ENCODE measurements at regions of chr17 and their contacts with region 1.

Region 1: DNA sequence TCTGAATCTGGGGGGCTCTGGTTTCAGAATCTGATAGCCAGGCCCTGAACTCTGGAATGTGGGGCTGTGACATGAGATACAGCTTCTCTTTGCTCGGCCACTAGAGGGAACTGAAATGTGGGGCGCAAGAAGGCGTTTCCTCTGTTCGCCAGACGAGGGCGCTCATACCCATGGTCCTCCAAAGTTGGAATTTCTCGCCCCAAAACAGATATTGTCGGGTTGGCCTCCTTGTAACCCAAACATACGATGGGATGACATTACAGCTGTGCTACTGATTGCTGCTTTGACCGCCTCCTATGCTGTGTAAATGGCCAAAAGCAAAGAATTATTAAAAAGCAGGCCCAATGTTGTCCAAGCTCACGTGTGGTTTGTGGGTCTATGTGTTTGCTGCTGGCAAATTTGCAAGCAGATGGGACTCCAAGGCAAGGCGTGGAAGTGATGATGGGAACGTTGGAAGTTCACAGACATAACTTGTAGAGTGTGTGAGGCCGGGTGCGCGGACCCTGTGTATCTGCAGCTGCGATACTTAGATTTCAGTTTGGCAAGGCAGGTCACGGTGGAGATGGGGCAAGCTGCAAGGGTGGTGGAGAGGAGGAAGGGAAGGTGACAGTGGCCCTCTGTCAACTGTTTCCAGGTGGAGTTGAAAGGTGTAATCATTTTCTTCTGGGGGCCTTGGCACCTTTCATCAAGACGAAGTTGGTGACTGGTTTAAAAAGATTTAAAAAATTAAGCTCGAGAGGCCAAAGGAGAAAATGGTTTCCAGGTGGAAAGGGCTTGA is 13.0 kb upstream of the MSI2 start:
- DNase-seq: peak; percentile 52 to 78 (median 68)
- ATAC-seq: peak; percentile 99
- H3K4me3 ChIP-seq: no peak overlapping the region
- H3K4me3 Mint-ChIP-seq: no peak overlapping the region
- H3K27ac ChIP-seq: no peak overlapping the region
- H3K27ac Mint-ChIP-seq: peak overlapping the region in 1 of 9 donors; percentile 36
- H3K4me1 ChIP-seq: no peaks in the 10 kb centered on the region
- H3K4me1 Mint-ChIP-seq: peaks cover 0 to 13% (median 0%) of the 10 kb centered on the region in 7 donors
- H3K27me3 ChIP-seq: no peaks in the 10 kb centered on the region
- H3K27me3 Mint-ChIP-seq: peaks cover 2 to 33% (median 5%) of the 10 kb centered on the region in 5 donors

Region 2: DNA sequence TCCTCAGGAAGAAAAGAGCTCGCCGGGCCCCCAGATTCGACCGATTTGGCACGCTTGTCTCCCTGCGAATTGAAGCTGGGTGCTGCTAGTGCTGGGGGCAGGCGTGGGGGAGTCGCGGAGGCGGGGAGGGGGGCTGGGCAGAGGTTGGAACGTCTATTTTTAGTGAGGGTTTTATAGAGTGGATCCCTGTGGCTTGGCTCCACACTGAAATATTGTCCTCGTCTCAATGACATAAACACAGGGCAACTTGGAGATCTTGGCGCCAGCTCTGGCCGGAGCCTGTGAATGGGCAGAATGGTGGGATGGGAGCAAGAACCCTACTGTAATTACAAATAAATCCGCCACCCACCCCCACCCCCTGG is 665.5 kb before region 1 on chr17:
- CTCF ChIA-PET with region 1: no interaction called
- POLR2A ChIA-PET with region 1: no interaction called
- intact Hi-C with region 1: no loop called
- DNase-seq: no peak
- ATAC-seq: no peak
- H3K4me3 ChIP-seq: no peak overlapping the region
- H3K4me3 Mint-ChIP-seq: no peak overlapping the region
- H3K27ac ChIP-seq: no peak overlapping the region
- H3K27ac Mint-ChIP-seq: no peak overlapping the region
- H3K4me1 ChIP-seq: no peaks in the 10 kb centered on the region
- H3K4me1 Mint-ChIP-seq: no peaks in the 10 kb centered on the region
- H3K27me3 ChIP-seq: peaks cover 0 to 3% of the 10 kb centered on the region in 2 donors
- H3K27me3 Mint-ChIP-seq: peaks cover 7 to 23% (median 22%) of the 10 kb centered on the region in 5 donors

Region 3: GRCh38 chr17:57130761-57131461 is 112.4 kb before region 1 on chr17:
- CTCF ChIA-PET with region 1: no interaction called
- POLR2A ChIA-PET with region 1: no interaction called
- intact Hi-C with region 1: loop called in 1 of 2 experiments (anchors 1 kb)
- DNase-seq: peak; percentile 53 to 82 (median 75)
- ATAC-seq: peak; percentile 96
- H3K4me3 ChIP-seq: no peak overlapping the region
- H3K4me3 Mint-ChIP-seq: peak overlapping the region in 5 of 10 donors; percentile 14 to 53 (median 46)
- H3K27ac ChIP-seq: no peak overlapping the region
- H3K27ac Mint-ChIP-seq: no peak overlapping the region
- H3K4me1 ChIP-seq: peaks cover 0 to 6% of the 10 kb centered on the region in 2 donors
- H3K4me1 Mint-ChIP-seq: peaks cover 4 to 11% (median 8%) of the 10 kb centered on the region in 7 donors
- H3K27me3 ChIP-seq: no peaks in the 10 kb centered on the region
- H3K27me3 Mint-ChIP-seq: no peaks in the 10 kb centered on the region

Region 4: GRCh38 chr17:57294629-57295535 is 51.5 kb after region 1 on chr17:
- CTCF ChIA-PET with region 1: interaction called, 4 read pairs
- POLR2A ChIA-PET with region 1: no interaction called
- intact Hi-C with region 1: loop called in 1 of 2 experiments (anchors 1 kb)
- DNase-seq: peak in 3 of 9 donors; percentile 11 to 31 (median 15)
- ATAC-seq: peak; percentile 70
- H3K4me3 ChIP-seq: no peak overlapping the region
- H3K4me3 Mint-ChIP-seq: peak overlapping the region in 9 of 10 donors; percentile 21 to 72 (median 30)
- H3K27ac ChIP-seq: no peak overlapping the region
- H3K27ac Mint-ChIP-seq: peak overlapping the region; percentile 1 to 81 (median 64)
- H3K4me1 ChIP-seq: peaks cover 0 to 6% of the 10 kb centered on the region in 2 donors
- H3K4me1 Mint-ChIP-seq: peaks cover 32 to 63% (median 45%) of the 10 kb centered on the region in 7 donors
- H3K27me3 ChIP-seq: no peaks in the 10 kb centered on the region
- H3K27me3 Mint-ChIP-seq: no peaks in the 10 kb centered on the region

Region 5: GRCh38 chr17:57455063-57455914 is 211.9 kb after region 1 on chr17:
- CTCF ChIA-PET with region 1: no interaction called
- POLR2A ChIA-PET with region 1: no interaction called
- intact Hi-C with region 1: loop called in 1 of 2 experiments (anchors 5 kb)
- DNase-seq: peak in 8 of 9 donors; percentile 19 to 57 (median 40)
- ATAC-seq: peak; percentile 78
- H3K4me3 ChIP-seq: peak overlapping the region; percentile 28
- H3K4me3 Mint-ChIP-seq: peak overlapping the region; percentile 70 to 87 (median 80)
- H3K27ac ChIP-seq: peak overlapping the region; percentile 48
- H3K27ac Mint-ChIP-seq: peak overlapping the region; percentile 62 to 94 (median 87)
- H3K4me1 ChIP-seq: peaks cover 40 to 44% of the 10 kb centered on the region in 2 donors
- H3K4me1 Mint-ChIP-seq: peaks cover 45 to 69% (median 64%) of the 10 kb centered on the region in 7 donors
- H3K27me3 ChIP-seq: no peaks in the 10 kb centered on the region
- H3K27me3 Mint-ChIP-seq: no peaks in the 10 kb centered on the region

Region 6: GRCh38 chr17:57604771-57605674 is 361.7 kb after region 1 on chr17:
- CTCF ChIA-PET with region 1: interaction called, 4 read pairs
- POLR2A ChIA-PET with region 1: no interaction called
- intact Hi-C with region 1: loop called in 1 of 2 experiments (anchors 2 kb)
- DNase-seq: peak in 3 of 9 donors; percentile 11 to 65 (median 29)
- ATAC-seq: peak; percentile 37
- H3K4me3 ChIP-seq: peak overlapping the region; percentile 27
- H3K4me3 Mint-ChIP-seq: peak overlapping the region; percentile 67 to 84 (median 76)
- H3K27ac ChIP-seq: peak overlapping the region; percentile 76
- H3K27ac Mint-ChIP-seq: peak overlapping the region; percentile 89 to 100 (median 97)
- H3K4me1 ChIP-seq: peaks cover 67 to 71% of the 10 kb centered on the region in 2 donors
- H3K4me1 Mint-ChIP-seq: peaks cover 49 to 87% (median 75%) of the 10 kb centered on the region in 7 donors
- H3K27me3 ChIP-seq: no peaks in the 10 kb centered on the region
- H3K27me3 Mint-ChIP-seq: no peaks in the 10 kb centered on the region

Region 7: DNA sequence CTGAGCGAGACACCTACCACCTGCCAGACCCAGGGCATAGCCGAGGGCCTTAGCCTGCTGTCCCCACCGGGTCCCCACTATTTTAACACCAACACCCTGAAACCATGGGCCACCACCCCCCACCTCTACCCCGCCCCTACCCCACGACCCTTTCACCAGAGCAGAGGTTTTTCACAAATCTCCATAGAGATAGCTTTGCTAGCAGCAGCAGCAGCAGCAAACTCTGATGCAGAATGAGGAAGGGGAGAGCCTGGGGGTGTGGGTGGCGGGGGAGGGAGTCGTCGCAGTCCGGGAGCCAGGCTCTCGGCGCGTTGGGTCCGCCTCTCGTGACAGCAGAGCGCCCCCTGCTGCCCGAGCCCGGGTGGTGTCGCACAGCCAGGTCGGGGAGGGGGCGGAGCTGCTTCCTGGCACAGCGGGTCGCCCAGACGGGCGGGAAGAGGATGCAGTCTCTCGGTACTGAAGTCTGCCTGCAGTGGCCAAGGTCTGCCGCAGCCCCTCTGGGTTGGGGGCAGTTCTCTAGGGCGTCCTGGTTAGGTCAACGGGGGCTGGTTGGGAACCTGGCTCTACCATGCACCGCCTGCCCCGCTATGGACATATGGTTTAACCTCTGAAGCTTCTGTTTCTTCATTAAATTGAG is 539.9 kb after region 1 on chr17:
- CTCF ChIA-PET with region 1: interaction called, 6 read pairs
- POLR2A ChIA-PET with region 1: no interaction called
- intact Hi-C with region 1: loop called (anchors 1 kb)
- DNase-seq: peak; percentile 52 to 88 (median 74)
- ATAC-seq: peak; percentile 95
- H3K4me3 ChIP-seq: no peak overlapping the region
- H3K4me3 Mint-ChIP-seq: peak overlapping the region in 2 of 10 donors; percentile 5 to 15
- H3K27ac ChIP-seq: no peak overlapping the region
- H3K27ac Mint-ChIP-seq: no peak overlapping the region
- H3K4me1 ChIP-seq: peaks cover 0 to 4% of the 10 kb centered on the region in 2 donors
- H3K4me1 Mint-ChIP-seq: peaks cover 0 to 7% (median 4%) of the 10 kb centered on the region in 7 donors
- H3K27me3 ChIP-seq: peaks cover 0 to 4% of the 10 kb centered on the region in 2 donors
- H3K27me3 Mint-ChIP-seq: peaks cover 11 to 28% (median 20%) of the 10 kb centered on the region in 5 donors